ENCODE measurements at regions of chr5 and their contacts with region 1.

Region 1: DNA sequence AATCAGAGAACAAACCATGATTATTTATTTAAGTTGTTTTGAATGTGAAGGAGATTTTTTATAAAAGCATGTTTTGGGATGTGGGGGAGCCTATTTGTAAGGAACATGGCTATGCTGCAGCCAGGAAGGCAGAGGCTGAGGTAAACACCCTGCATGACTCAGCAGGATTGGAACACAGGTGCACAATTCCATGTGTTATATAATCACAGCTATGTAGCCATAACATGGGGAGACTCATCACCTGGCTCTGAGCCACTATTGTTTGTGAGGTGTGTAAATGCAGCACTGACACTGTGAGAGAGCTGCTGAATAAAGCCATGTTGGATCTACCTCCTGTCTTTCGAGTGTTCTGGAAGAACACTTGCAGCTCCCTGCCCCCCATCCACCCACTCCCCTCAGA is 1009.8 kb downstream of the DNAH5 start:
- DNase-seq: no peak
- H3K4me3 ChIP-seq: no peak overlapping the region
- H3K27ac ChIP-seq: no peak overlapping the region
- H3K4me1 ChIP-seq: no peaks in the 10 kb centered on the region
- H3K27me3 ChIP-seq: no peaks in the 10 kb centered on the region
- CTCF ChIP-seq: no peak
- POLR2A ChIP-seq: no peak

Region 2: DNA sequence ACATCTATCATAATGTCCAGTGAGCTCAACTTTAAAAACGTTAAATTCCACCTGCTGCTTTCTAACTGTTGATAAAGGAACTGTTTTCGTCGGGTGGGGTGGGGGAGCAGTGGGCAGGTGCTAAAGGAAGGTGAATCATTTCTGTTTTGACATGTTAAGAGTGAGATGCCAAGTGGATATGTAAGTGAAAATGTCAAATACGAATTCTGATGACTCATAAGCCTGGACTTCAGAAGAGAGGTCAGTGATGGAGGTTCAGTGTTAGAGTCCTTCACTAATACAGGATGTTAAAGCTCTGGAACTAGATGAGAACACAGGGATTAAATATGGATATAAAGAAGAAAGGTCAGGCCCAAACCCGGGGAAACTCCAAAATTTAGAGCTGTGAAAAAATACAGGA is 412.6 kb before region 1 on chr5:
- intact Hi-C with region 1: no loop called
- DNase-seq: no peak
- H3K4me3 ChIP-seq: no peak overlapping the region
- H3K27ac ChIP-seq: no peak overlapping the region
- H3K4me1 ChIP-seq: no peaks in the 10 kb centered on the region
- H3K27me3 ChIP-seq: no peaks in the 10 kb centered on the region
- CTCF ChIP-seq: no peak
- POLR2A ChIP-seq: no peak

Region 3: DNA sequence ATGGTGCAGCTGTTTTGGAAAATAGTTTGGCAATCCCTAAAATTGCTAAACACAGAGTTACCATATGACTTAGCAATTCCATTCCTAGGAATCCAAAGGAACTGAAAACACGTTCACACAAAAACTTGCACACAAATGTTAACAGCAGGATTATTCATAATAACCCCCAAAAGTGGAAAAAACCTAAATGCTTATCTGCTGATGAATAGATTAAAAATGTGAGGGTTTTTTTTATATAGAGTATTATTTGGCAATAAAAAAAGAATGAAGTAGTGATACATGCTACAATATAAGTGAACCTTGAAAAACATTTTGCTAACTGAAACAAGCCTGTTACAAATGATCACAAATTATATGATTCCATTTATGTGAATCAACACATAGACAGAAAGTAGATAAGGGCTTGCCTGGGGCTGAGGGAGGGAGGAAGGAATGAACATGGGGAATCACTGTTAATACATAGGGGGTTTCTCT is 1163.3 kb after region 1 on chr5:
- intact Hi-C with region 1: loop called (anchors 10 kb)
- DNase-seq: no peak
- H3K4me3 ChIP-seq: no peak overlapping the region
- H3K27ac ChIP-seq: no peak overlapping the region
- H3K4me1 ChIP-seq: no peaks in the 10 kb centered on the region
- H3K27me3 ChIP-seq: no peaks in the 10 kb centered on the region
- CTCF ChIP-seq: no peak
- POLR2A ChIP-seq: no peak

Measured in breast epithelium (tissue), 4 donors.